ENCODE measurements at regions of chr9 and their contacts with region 1.

Region 1: GRCh38 chr9:134570151-134570621 is 71.4 kb upstream of the COL5A1 start:
- DNase-seq: peak in 1 of 2 donors; percentile 2
- ATAC-seq: peak in 3 of 8 donors; percentile 28 to 58 (median 39)
- H3K4me3 ChIP-seq: no peak overlapping the region
- H3K27ac ChIP-seq: no peak overlapping the region
- H3K4me1 ChIP-seq: no peaks in the 10 kb centered on the region
- H3K27me3 ChIP-seq: no peaks in the 10 kb centered on the region
- CTCF ChIP-seq: no peak

Region 2: DNA sequence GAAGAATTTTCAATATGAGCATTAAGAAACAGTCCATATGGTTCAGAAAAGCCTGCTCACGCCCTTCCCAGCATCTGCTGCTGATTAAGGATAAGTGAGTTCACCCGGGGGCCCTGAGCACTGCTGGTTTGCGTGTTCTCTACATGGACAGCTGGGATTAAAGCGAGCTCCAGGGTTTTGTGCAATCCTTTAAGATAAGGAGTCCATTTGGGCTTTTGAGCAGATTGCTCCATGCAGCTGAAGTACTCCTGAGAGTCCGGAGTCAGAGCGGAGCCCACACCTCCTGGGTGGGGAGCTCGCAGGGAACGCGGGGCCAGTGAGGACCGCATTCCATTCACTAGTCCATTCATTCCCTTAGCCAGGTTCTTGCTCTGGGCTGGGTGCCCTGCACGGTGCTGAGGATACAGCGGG is 77.9 kb before region 1 on chr9:
- intact Hi-C with region 1: no loop called
- DNase-seq: peak; percentile 54 to 63
- ATAC-seq: peak; percentile 68 to 91 (median 78)
- H3K4me3 ChIP-seq: no peak overlapping the region
- H3K27ac ChIP-seq: peak overlapping the region in 5 of 10 donors; percentile 36 to 58 (median 44)
- H3K4me1 ChIP-seq: peaks cover 0 to 29% (median 4%) of the 10 kb centered on the region in 9 donors
- H3K27me3 ChIP-seq: peaks cover 0 to 53% (median 20%) of the 10 kb centered on the region in 7 donors
- CTCF ChIP-seq: no peak

Region 3: DNA sequence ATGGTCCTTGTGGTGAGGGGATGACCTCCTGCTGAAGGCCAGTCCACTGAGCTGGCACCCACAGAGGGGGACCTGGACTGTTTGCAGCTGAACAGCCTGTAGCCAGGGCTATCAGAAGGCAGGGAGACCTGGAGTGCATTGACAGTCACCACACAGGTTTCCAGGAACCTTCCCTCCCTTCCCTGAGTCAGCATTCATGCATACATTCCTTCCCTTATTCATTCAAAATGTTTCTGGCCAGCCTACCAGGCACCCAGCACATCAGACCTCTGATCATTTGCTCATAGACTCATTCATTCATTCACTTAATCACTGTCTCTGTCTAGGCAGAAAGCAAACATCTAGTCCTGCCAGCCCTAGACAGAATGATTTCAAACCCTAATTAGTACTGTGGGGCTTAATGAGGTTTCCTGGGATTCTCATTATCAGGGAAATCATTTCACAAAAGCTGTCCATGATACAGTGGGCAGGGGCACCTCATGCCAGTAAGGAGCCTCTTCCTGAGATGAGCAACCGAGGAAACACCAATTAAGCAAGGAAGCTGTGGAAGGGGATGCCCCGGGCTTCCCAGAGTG is 799.3 kb after region 1 on chr9:
- intact Hi-C with region 1: loop called in 1 of 10 experiments (anchors 10 kb)
- DNase-seq: no peak
- ATAC-seq: no peak
- H3K4me3 ChIP-seq: no peak overlapping the region
- H3K27ac ChIP-seq: no peak overlapping the region
- H3K4me1 ChIP-seq: no peaks in the 10 kb centered on the region
- H3K27me3 ChIP-seq: peaks cover 0 to 60% (median 37%) of the 10 kb centered on the region in 7 donors
- CTCF ChIP-seq: no peak